Gastrocnemius medialis (tissue), 4 donors: ENCODE measurements at regions of chr2 and their contacts with region 1.

Region 1: GRCh38 chr2:214481204-214481603 is 70.3 kb downstream of the VWC2L start:
- DNase-seq: peak; percentile 42 to 62
- ATAC-seq: peak; percentile 97
- H3K4me3 ChIP-seq: no peak overlapping the region
- H3K27ac ChIP-seq: peak overlapping the region; percentile 78 to 87 (median 84)
- H3K4me1 ChIP-seq: peaks cover 10 to 46% of the 10 kb centered on the region in 2 donors
- H3K27me3 ChIP-seq: no peaks in the 10 kb centered on the region
- CTCF ChIP-seq: no peak
- POLR2A ChIP-seq: peak in 1 of 2 donors; percentile 42

Region 2: GRCh38 chr2:213848631-213849030 is 632.6 kb before region 1 on chr2:
- in situ Hi-C with region 1: no loop called
- intact Hi-C with region 1: loop called (anchors 10 kb)
- DNase-seq: no peak
- ATAC-seq: peak in 1 of 2 donors; percentile 59
- H3K4me3 ChIP-seq: no peak overlapping the region
- H3K27ac ChIP-seq: peak overlapping the region in 3 of 4 donors; percentile 62 to 84 (median 72)
- H3K4me1 ChIP-seq: peaks cover 7 to 26% of the 10 kb centered on the region in 2 donors
- H3K27me3 ChIP-seq: no peaks in the 10 kb centered on the region
- CTCF ChIP-seq: no peak
- POLR2A ChIP-seq: no peak

Region 3: DNA sequence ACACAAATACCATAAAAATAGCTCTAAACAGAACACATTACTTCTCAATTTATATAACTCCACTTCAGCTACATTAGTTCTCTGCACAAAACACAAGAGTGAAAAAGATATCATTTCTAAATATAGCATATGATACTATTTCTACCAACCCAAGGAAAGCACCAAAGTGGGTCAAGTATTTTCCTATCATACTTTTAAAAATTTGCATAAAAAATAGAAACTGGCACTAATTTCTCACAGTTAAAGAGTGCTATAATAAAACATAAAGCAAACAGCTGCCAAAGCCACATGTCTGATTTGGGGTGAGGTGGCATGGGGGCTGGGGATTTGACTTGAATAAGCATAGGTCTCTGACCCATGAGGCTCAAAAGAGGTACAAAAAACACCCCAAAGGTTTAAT is 266.8 kb after region 1 on chr2:
- in situ Hi-C with region 1: no loop called
- intact Hi-C with region 1: loop called (anchors 10 kb)
- DNase-seq: no peak
- ATAC-seq: peak; percentile 82 to 96
- H3K4me3 ChIP-seq: no peak overlapping the region
- H3K27ac ChIP-seq: peak overlapping the region; percentile 63 to 77 (median 68)
- H3K4me1 ChIP-seq: peaks cover 11 to 13% of the 10 kb centered on the region in 2 donors
- H3K27me3 ChIP-seq: no peaks in the 10 kb centered on the region
- CTCF ChIP-seq: no peak
- POLR2A ChIP-seq: no peak